ENCODE measurements at regions of chr6 and their contacts with region 1.

Region 1: GRCh38 chr6:27263886-27264285 is 16.4 kb downstream of the PRSS16 start:
- DNase-seq: no peak
- ATAC-seq: peak; percentile 62; the same call in 2 of the 3 replicates
- H3K4me3 ChIP-seq: no peak overlapping the region
- H3K27ac ChIP-seq: no peak overlapping the region
- H3K4me1 ChIP-seq: peaks cover 0 to 11% of the 10 kb centered on the region in 2 experiments; a peak in 4 of 5 replicates
- H3K27me3 ChIP-seq: no peaks in the 10 kb centered on the region
- CTCF ChIP-seq: no peak
- EP300 ChIP-seq: no peak
- POLR2A ChIP-seq: no peak
- RAD21 ChIP-seq: no peak

Region 2: GRCh38 chr6:27280064-27280539 is 16.2 kb after region 1 on chr6:
- CTCF ChIA-PET with region 1: no interaction called
- POLR2A ChIA-PET with region 1: interaction called, 17 read pairs
- in situ Hi-C with region 1: no loop called
- intact Hi-C with region 1: no loop called
- DNase-seq: peak; percentile 68 to 90 (median 76)
- ATAC-seq: peak; percentile 81
- H3K4me3 ChIP-seq: peak overlapping the region; percentile 58
- H3K27ac ChIP-seq: peak overlapping the region; percentile 70
- H3K4me1 ChIP-seq: peaks cover 4 to 6% of the 10 kb centered on the region in 2 experiments; a peak in 3 of 5 replicates
- H3K27me3 ChIP-seq: no peaks in the 10 kb centered on the region
- CTCF ChIP-seq: no peak; a peak in 2 of 6 replicates
- EP300 ChIP-seq: peak; percentile 65
- POLR2A ChIP-seq: no peak
- RAD21 ChIP-seq: no peak; a peak in 1 of 4 replicates